ENCODE measurements at regions of chr9 and their contacts with region 1.

Region 1: DNA sequence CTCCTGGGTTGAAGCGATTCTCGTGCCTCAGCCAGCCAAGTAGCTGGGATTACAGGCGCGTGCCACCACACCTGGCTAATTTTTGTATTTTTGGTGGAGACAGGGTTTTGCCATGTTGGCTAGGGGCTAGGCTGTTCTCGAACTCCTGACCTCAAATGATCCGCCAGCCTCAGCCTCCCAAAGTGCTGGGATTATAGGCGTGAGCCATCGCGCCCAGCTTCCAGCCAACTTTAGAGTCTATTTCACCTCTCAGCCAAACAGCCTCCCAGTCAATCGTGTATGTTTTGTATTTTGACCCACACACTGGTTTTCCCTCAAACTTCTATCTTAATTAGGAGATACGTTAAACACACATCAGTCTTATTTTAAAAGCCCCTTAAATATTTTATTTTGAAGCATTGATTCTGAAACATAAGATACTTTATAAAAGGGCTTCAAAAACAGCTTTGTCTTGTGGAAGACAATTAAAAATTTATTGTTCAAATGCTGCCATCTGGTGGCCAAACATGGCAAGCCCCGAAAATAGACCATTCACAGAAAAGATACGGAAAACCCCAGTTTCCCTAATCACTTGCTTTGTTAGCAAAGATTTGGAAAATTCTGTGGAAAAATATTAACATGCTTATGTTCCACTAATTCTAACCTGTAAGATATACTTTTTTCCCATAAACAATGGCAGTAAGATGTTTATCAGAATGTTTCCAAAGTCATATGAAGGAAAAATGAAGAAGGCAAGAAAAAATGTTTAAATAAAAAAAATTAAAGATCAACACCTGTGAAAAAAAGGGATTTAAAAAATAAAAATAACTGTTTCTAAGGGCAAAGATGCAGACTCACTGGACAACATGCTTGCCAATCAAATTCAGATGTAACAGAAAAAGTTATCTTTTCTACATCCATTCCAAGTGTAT is 33.1 kb downstream of the APTX start:
- DNase-seq: no peak
- H3K4me3 Mint-ChIP-seq: no peak overlapping the region
- H3K27ac Mint-ChIP-seq: no peak overlapping the region
- H3K4me1 Mint-ChIP-seq: peaks cover 2% of the 10 kb centered on the region
- H3K27me3 Mint-ChIP-seq: no peaks in the 10 kb centered on the region

Region 2: DNA sequence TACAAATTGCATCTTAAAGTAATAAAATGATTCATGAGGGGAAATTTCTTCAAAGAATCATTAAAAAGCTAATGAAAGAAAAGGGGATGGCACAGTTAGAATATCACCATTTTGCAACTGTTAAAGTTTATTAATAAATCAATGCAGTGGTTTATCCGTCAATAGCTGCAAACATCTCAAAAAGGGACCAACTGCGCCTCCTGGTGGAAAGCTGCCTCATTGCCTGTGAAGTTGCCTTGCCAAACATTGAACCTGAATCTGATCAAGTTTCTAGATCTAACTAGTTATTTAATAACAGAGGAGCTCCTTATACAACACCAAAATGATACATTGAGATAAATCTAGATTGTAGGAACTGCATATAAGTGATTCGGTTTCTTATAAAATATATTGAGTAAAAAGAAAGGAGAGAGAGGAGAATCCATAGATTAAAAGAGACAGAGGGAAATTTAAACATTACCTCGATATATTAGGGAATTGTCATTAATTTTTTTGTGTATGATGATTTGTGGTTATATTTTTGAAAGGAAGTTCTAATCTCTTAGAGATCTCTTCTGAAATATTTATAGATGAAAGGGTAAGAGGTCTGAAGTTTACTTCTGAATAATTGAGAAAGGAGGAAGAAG is 388.5 kb before region 1 on chr9:
- intact Hi-C with region 1: loop called (anchors 2 kb)
- DNase-seq: peak; percentile 53
- H3K4me3 Mint-ChIP-seq: no peak overlapping the region
- H3K27ac Mint-ChIP-seq: no peak overlapping the region
- H3K4me1 Mint-ChIP-seq: peaks cover 7% of the 10 kb centered on the region
- H3K27me3 Mint-ChIP-seq: peaks cover 23% of the 10 kb centered on the region

Region 3: DNA sequence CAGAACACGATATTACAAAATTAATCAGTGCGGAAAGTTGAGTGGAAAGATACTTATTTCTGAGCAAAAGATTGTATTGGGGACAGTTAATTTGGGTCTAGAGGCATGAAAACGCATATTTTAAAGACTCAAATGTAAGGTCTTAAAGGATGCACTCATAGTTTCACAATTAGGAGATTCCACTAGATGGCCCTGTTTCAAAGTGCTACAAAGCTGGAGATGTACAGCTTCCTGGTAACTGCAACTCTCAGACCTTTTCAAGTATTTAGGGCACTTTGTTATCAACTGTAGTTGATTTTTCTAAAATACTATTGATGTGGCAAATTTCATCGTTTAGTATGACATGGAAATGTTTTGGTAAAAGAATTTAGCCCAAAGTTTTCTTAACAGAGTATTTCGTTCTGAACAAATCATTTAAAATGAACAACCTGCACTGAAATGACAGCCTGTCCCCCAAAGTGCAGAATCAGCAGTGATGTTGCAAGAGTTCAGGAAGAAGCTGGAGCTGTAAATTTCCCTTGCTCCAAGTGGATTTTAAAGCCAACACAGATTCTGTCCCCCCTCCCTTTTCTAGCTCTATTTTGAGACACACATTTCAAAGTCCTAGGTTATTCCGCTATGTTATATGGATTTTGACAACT is 379.2 kb before region 1 on chr9:
- intact Hi-C with region 1: loop called (anchors 2 kb)
- DNase-seq: no peak
- H3K4me3 Mint-ChIP-seq: no peak overlapping the region
- H3K27ac Mint-ChIP-seq: no peak overlapping the region
- H3K4me1 Mint-ChIP-seq: peaks cover 2% of the 10 kb centered on the region
- H3K27me3 Mint-ChIP-seq: peaks cover 17% of the 10 kb centered on the region